CD4-positive, alpha-beta memory T cell (primary cell): ENCODE measurements at regions of chr12 and their contacts with region 1.

Region 1: GRCh38 chr12:31890295-31891285 is 68.6 kb upstream of the RESF1 start:
- DNase-seq: peak in 4 of 5 donors; percentile 63 to 75 (median 70)
- H3K4me3 ChIP-seq: peak overlapping the region in 1 of 2 donors; percentile 15
- H3K4me3 Mint-ChIP-seq: peak overlapping the region; percentile 20 to 81 (median 70)
- H3K27ac ChIP-seq: peak overlapping the region; percentile 33
- H3K27ac Mint-ChIP-seq: peak overlapping the region; percentile 85 to 91 (median 89)
- H3K4me1 ChIP-seq: peaks cover 81% of the 10 kb centered on the region
- H3K4me1 Mint-ChIP-seq: peaks cover 36 to 76% (median 53%) of the 10 kb centered on the region in 4 donors
- H3K27me3 ChIP-seq: no peaks in the 10 kb centered on the region
- H3K27me3 Mint-ChIP-seq: no peaks in the 10 kb centered on the region

Region 2: DNA sequence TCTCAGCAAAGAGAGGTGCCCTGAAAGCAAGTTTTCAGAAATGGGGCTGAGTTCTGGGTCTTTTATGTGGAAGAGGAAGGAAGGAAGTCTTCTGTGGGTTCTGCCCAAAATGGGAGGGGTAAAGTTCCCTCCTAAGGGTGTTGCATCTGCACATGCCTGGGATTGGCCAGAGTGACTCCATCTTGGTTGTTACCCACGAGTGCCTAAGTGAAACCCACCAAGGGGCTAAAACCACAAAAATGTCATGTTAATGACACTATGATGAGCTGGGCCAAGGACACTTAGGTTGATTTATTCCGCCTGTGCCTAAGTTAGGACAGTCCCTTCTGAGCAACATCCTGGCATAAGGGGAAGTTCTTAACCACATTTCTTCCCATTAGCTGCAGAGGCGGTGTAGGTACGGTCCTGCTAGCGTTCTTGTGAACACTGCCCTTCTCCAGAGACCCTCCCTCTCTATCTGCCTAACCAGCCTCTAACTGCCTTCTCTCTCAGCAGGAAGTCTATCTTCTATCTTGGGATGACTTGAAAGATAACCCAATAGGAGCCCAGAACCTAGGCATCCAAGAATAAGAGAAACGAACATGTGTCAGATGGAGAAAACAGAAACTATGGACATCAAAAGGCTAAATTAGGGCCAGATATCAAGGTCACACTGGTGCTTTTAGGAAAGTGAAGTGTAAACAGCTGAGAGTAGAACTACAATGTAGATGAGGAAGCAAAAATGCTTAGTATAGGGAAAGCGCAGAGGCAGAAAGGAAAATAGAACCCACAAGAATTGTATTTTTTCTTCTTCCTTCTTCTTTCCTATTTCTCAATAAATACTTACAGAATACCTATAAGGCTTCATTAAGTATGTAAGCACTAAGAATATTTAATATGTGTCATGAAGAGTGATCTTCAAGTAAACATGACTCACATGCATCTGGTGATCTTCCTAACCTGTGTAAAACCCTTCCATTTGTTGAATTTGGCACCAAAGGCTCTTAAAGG is 57.6 kb before region 1 on chr12:
- CTCF ChIA-PET with region 1: no interaction called
- POLR2A ChIA-PET with region 1: interaction called, 25 read pairs
- intact Hi-C with region 1: no loop called
- DNase-seq: peak; percentile 48 to 73 (median 67)
- H3K4me3 ChIP-seq: peak overlapping the region; percentile 7 to 21
- H3K4me3 Mint-ChIP-seq: peak overlapping the region in 7 of 8 donors; percentile 62 to 81 (median 70)
- H3K27ac ChIP-seq: no peak overlapping the region
- H3K27ac Mint-ChIP-seq: peak overlapping the region; percentile 57 to 90 (median 83)
- H3K4me1 ChIP-seq: peaks cover 43% of the 10 kb centered on the region
- H3K4me1 Mint-ChIP-seq: peaks cover 34 to 56% (median 47%) of the 10 kb centered on the region in 4 donors
- H3K27me3 ChIP-seq: no peaks in the 10 kb centered on the region
- H3K27me3 Mint-ChIP-seq: no peaks in the 10 kb centered on the region

Region 3: GRCh38 chr12:31874961-31875608 is 15.5 kb before region 1 on chr12:
- CTCF ChIA-PET with region 1: interaction called, 8 read pairs
- POLR2A ChIA-PET with region 1: interaction called, 44 read pairs
- intact Hi-C with region 1: no loop called
- DNase-seq: peak; percentile 62 to 88 (median 73)
- H3K4me3 ChIP-seq: peak overlapping the region in 1 of 2 donors; percentile 9
- H3K4me3 Mint-ChIP-seq: peak overlapping the region in 7 of 8 donors; percentile 27 to 81 (median 75)
- H3K27ac ChIP-seq: peak overlapping the region; percentile 77
- H3K27ac Mint-ChIP-seq: peak overlapping the region; percentile 95 to 99 (median 98)
- H3K4me1 ChIP-seq: peaks cover 33% of the 10 kb centered on the region
- H3K4me1 Mint-ChIP-seq: peaks cover 31 to 64% (median 49%) of the 10 kb centered on the region in 4 donors
- H3K27me3 ChIP-seq: no peaks in the 10 kb centered on the region
- H3K27me3 Mint-ChIP-seq: no peaks in the 10 kb centered on the region

Region 4: GRCh38 chr12:31928246-31929026 is 37.8 kb after region 1 on chr12:
- CTCF ChIA-PET with region 1: interaction called, 6 read pairs
- POLR2A ChIA-PET with region 1: interaction called, 11 read pairs
- intact Hi-C with region 1: no loop called
- DNase-seq: peak in 4 of 5 donors; percentile 41 to 58 (median 50)
- H3K4me3 ChIP-seq: peak overlapping the region in 1 of 2 donors; percentile 22
- H3K4me3 Mint-ChIP-seq: peak overlapping the region; percentile 86 to 95 (median 90)
- H3K27ac ChIP-seq: peak overlapping the region; percentile 56
- H3K27ac Mint-ChIP-seq: peak overlapping the region; percentile 96 to 99 (median 97)
- H3K4me1 ChIP-seq: peaks cover 47% of the 10 kb centered on the region
- H3K4me1 Mint-ChIP-seq: peaks cover 43 to 61% (median 52%) of the 10 kb centered on the region in 4 donors
- H3K27me3 ChIP-seq: no peaks in the 10 kb centered on the region
- H3K27me3 Mint-ChIP-seq: no peaks in the 10 kb centered on the region